B cell (primary cell): ENCODE measurements at regions of chr22 and their contacts with region 1.

Region 1: DNA sequence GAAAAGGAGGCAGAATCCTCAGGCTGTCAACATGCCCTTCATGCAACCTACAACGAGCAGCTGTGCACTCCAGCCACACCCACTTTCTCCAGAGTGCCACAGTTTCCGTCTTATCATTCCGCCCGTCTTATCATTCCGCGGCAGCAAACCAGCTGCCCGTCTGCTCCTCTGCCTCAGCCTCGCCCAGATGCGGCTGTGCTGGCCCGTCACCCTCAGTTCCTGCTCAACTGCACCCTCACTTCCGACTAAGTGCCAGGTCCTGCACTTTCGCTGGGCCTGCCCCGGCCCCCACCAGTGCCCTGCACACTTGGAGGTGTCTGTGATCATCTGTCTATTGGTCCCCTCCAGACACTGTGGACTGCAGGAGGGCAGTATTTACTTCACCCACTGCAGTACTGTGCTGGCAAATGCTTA is 43.7 kb downstream of the MICAL3 start:
- DNase-seq: peak; percentile 66
- ATAC-seq: peak; percentile 79
- H3K4me3 ChIP-seq: peak overlapping the region in 2 of 5 experiments; percentile 19 to 48
- H3K4me3 Mint-ChIP-seq: peak overlapping the region; percentile 86
- H3K27ac ChIP-seq: peak overlapping the region; percentile 63 to 82
- H3K27ac Mint-ChIP-seq: peak overlapping the region; percentile 95
- H3K4me1 ChIP-seq: peaks cover 58 to 82% of the 10 kb centered on the region in 2 donors
- H3K4me1 Mint-ChIP-seq: peaks cover 74% of the 10 kb centered on the region
- H3K27me3 ChIP-seq: no peaks in the 10 kb centered on the region
- H3K27me3 Mint-ChIP-seq: no peaks in the 10 kb centered on the region
- CTCF ChIP-seq: no peak

Region 2: GRCh38 chr22:17930455-17931313 is 50.0 kb before region 1 on chr22:
- CTCF ChIA-PET with region 1: no interaction called
- POLR2A ChIA-PET with region 1: no interaction called
- intact Hi-C with region 1: no loop called
- DNase-seq: no peak
- ATAC-seq: no peak
- H3K4me3 ChIP-seq: no peak overlapping the region
- H3K4me3 Mint-ChIP-seq: no peak overlapping the region
- H3K27ac ChIP-seq: no peak overlapping the region
- H3K27ac Mint-ChIP-seq: no peak overlapping the region
- H3K4me1 ChIP-seq: peaks cover 29 to 31% of the 10 kb centered on the region in 2 donors
- H3K4me1 Mint-ChIP-seq: peaks cover 87% of the 10 kb centered on the region
- H3K27me3 ChIP-seq: no peaks in the 10 kb centered on the region
- H3K27me3 Mint-ChIP-seq: no peaks in the 10 kb centered on the region
- CTCF ChIP-seq: no peak

Region 3: GRCh38 chr22:17950651-17951214 is 29.9 kb before region 1 on chr22:
- CTCF ChIA-PET with region 1: no interaction called
- POLR2A ChIA-PET with region 1: no interaction called
- intact Hi-C with region 1: no loop called
- DNase-seq: no peak
- ATAC-seq: no peak
- H3K4me3 ChIP-seq: no peak overlapping the region
- H3K4me3 Mint-ChIP-seq: no peak overlapping the region
- H3K27ac ChIP-seq: peak overlapping the region in 1 of 2 donors; percentile 34
- H3K27ac Mint-ChIP-seq: peak overlapping the region; percentile 56
- H3K4me1 ChIP-seq: peaks cover 43 to 64% of the 10 kb centered on the region in 2 donors
- H3K4me1 Mint-ChIP-seq: peaks cover 83% of the 10 kb centered on the region
- H3K27me3 ChIP-seq: no peaks in the 10 kb centered on the region
- H3K27me3 Mint-ChIP-seq: no peaks in the 10 kb centered on the region
- CTCF ChIP-seq: no peak

Region 4: DNA sequence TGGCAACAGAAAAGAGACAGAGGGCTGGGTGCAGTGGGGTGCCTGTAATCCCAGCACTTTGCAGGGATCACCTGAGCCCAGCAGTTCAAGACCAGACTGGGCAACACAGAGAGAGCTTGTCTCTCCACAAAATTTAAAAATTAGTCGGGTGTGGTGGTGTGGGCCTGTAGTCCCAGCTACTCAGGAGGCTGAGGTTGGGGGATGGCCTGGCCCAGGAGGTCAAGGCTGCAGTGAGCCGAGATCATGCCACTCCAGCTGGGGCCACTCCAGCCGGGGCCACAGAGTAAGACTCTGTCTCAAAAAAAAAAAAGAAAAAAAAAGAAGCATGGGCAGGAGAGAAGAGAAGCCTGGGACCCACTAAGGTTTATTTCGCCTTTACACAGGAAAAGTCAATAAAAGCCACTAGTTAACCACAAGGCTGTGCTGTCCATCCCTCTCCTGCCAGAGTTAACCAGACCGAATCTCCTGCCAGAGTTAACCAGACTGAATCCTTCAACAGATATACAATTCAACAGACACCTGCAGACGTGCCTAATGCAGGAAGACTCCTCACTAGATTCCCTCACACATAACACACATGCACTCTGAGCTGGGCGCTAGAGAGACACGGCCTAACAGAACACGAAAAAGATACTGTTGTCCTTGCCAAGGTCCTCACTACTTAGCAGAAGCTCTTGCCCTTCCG is 13.9 kb after region 1 on chr22:
- CTCF ChIA-PET with region 1: interaction called, 4 read pairs
- POLR2A ChIA-PET with region 1: interaction called, 18 read pairs
- intact Hi-C with region 1: loop called (anchors 2 kb)
- DNase-seq: peak; percentile 82
- ATAC-seq: peak; percentile 32
- H3K4me3 ChIP-seq: peak overlapping the region in 1 of 5 experiments; percentile 19
- H3K4me3 Mint-ChIP-seq: peak overlapping the region; percentile 82
- H3K27ac ChIP-seq: peak overlapping the region; percentile 91 to 95
- H3K27ac Mint-ChIP-seq: peak overlapping the region; percentile 94
- H3K4me1 ChIP-seq: peaks cover 94 to 98% of the 10 kb centered on the region in 2 donors
- H3K4me1 Mint-ChIP-seq: peaks cover 95% of the 10 kb centered on the region
- H3K27me3 ChIP-seq: no peaks in the 10 kb centered on the region
- H3K27me3 Mint-ChIP-seq: no peaks in the 10 kb centered on the region
- CTCF ChIP-seq: no peak

Region 5: GRCh38 chr22:18145661-18146388 is 165.2 kb after region 1 on chr22:
- CTCF ChIA-PET with region 1: no interaction called
- POLR2A ChIA-PET with region 1: no interaction called
- intact Hi-C with region 1: no loop called
- DNase-seq: no peak
- ATAC-seq: no peak
- H3K4me3 ChIP-seq: no peak overlapping the region
- H3K4me3 Mint-ChIP-seq: no peak overlapping the region
- H3K27ac ChIP-seq: no peak overlapping the region
- H3K27ac Mint-ChIP-seq: no peak overlapping the region
- H3K4me1 ChIP-seq: peaks cover 6 to 14% of the 10 kb centered on the region in 2 donors
- H3K4me1 Mint-ChIP-seq: peaks cover 10% of the 10 kb centered on the region
- H3K27me3 ChIP-seq: no peaks in the 10 kb centered on the region
- H3K27me3 Mint-ChIP-seq: no peaks in the 10 kb centered on the region
- CTCF ChIP-seq: no peak